ENCODE measurements at regions of chr3 and their contacts with region 1.

Region 1: GRCh38 chr3:185764163-185764979 is 60.5 kb downstream of the IGF2BP2 start:
- DNase-seq: no peak
- H3K4me3 Mint-ChIP-seq: no peak overlapping the region
- H3K27ac Mint-ChIP-seq: no peak overlapping the region
- H3K4me1 Mint-ChIP-seq: no peaks in the 10 kb centered on the region
- H3K27me3 Mint-ChIP-seq: peaks cover 40% of the 10 kb centered on the region

Region 2: DNA sequence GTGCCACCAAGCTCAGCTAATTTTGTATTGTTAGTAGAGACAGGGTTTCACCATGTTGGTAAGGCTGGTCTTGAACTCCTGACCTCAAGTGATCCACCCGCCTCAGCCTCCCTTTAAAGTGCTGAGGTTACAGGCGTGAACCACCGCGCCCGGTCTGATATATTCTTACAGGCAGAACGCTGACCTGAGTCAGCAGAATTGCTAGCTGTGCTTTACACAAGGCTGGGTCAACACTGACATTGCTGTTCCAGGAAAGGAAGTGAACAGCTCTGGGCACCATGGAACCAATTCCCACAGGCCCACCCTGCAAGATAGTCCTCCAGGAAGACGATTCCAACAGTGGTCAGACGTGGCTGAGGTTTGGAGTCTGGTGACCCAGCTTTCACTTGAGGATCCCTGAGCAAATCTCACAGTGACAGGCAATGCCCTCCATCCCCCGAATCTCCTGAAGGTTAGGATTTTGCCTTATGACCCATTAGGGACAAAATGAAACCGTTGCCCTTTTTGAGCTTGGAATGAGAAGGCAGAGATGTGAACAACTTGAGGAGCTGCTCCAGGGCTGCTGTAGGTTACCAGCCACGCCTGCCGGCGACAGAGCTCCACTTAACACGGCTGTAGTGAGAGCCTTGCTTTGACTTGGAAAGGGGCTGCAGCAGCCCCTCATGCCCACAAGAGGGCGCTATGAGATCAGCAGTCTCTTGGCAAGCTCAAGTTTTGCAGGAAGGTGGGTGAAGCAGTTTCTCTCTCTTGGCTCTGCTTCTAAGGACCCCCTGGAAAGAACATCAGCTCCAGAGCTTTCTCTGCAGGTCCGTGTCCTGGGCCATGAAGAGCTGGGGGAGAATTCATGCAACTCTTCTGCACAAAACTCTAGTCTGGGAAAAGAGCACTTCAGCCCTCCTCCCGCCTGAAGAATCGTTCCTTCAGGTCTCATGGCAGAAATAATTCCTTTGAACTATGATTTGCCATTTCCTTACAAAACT is 104.1 kb before region 1 on chr3:
- intact Hi-C with region 1: loop called (anchors 1 kb)
- DNase-seq: peak; percentile 51
- H3K4me3 Mint-ChIP-seq: no peak overlapping the region
- H3K27ac Mint-ChIP-seq: no peak overlapping the region
- H3K4me1 Mint-ChIP-seq: no peaks in the 10 kb centered on the region
- H3K27me3 Mint-ChIP-seq: peaks cover 7% of the 10 kb centered on the region

Region 3: GRCh38 chr3:185677146-185677829 is 87.1 kb before region 1 on chr3:
- intact Hi-C with region 1: loop called (anchors 1 kb)
- DNase-seq: no peak
- H3K4me3 Mint-ChIP-seq: no peak overlapping the region
- H3K27ac Mint-ChIP-seq: no peak overlapping the region
- H3K4me1 Mint-ChIP-seq: no peaks in the 10 kb centered on the region
- H3K27me3 Mint-ChIP-seq: peaks cover 28% of the 10 kb centered on the region

Region 4: GRCh38 chr3:185733980-185734724 is 30.2 kb before region 1 on chr3:
- intact Hi-C with region 1: loop called (anchors 1 kb)
- DNase-seq: no peak
- H3K4me3 Mint-ChIP-seq: no peak overlapping the region
- H3K27ac Mint-ChIP-seq: no peak overlapping the region
- H3K4me1 Mint-ChIP-seq: no peaks in the 10 kb centered on the region
- H3K27me3 Mint-ChIP-seq: peaks cover 5% of the 10 kb centered on the region

Measured in activated T-helper 1 cell treated with anti-CD3 and anti-CD28 coated beads, Interleukin-12 subunit alpha, Interleukin-12 subunit beta, Interleukin-2, Interleukin-4 antibody, amounts not matched to agents 30 ng/mL and 10 ng/mL and 1 ng/mL, durations not matched to agents 14 hours and 24 hours and 36 hours (primary cell).